ENCODE measurements at regions of chr11 and their contacts with region 1.

Region 1: DNA sequence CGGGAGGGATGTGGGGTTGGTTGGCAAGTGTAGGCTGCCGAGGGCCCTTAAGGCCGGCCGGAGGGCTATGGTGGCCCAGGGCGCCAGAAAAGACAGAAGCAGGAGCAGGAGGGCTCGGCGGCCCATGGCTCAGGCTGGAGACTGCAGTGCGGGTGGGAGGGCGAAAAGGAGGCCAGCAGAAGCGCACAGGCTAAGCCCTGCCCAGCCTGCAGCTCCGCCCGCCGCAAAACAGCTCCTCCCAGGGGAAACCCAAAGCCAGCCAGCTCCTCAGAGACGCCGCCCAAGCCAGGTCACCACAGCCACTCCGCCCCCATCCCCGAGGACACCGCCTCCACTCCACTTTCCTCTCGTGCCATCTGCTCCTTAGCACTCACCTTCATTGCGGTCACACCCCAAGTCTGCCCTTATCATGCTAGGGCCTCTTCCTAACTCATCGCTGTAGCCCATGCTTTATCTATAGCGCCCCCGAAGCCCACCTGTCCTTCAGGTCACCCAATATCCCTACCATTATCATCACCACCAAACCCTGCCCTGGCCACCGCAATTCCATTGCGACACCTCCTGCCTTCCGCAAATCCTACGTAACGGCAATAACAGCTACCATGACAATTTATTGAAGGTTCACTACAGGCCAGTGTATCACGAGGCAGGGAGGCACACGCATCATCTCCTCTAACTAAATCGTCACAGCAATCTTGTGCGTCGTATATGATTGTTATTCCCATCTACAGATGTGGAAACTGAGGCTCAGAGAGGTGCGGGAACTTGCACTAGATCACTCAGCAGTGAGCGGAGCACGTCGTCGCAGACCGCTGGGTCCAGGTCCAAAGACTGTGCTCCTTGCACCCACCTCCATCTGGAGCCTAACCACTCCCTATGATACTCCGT is at the start of gene PRCP:
- DNase-seq: peak; percentile 81
- ATAC-seq: peak; percentile 95
- H3K4me3 ChIP-seq: peak within 1 kb of the TSS; percentile 87 to 96 (median 94)
- H3K27ac ChIP-seq: peak within 1 kb of the TSS; percentile 82
- H3K4me1 ChIP-seq: peaks cover 34% of the 10 kb centered on the region
- H3K27me3 ChIP-seq: no peaks in the 10 kb centered on the region; a peak in 1 of 5 replicates
- CTCF ChIP-seq: peak; percentile 42; the same call in 1 of the 2 replicates
- EP300 ChIP-seq: no peak
- POLR2A ChIP-seq: peak; percentile 82 to 90
- RAD21 ChIP-seq: peak; percentile 44; the same call in 1 of the 2 replicates
- total RNA-seq, gene PRCP: 49.9 and 84.2 TPM in 2 replicates

Region 2: DNA sequence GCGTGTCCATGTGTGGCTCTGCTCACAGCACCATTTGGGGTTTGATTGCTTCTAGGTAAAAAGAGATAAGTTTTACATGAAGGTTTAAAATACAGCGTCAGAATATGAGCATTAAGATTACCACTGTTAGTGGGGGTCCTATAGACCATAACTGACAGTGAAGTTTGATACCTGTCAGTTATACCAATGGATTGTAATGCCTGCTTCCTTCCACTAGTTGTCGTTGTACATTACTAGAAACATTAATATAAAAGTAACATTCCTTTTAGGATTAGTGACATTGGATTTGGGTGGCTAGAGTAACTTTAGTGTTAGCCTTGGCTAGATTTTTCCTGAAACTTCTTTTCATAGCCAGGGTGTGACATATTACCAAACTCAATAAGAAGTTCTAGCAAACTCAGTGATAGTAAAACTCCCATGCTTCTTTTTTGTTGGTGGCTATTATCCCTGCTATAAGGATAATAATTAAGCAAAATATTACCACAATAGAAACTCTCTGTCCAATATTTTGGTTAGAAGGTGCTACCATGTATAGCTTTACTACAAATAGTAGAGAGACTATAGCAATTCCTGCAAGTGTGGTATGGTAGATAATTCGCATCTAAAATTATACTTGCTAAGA is 223.9 kb before region 1 on chr11:
- CTCF ChIA-PET with region 1: no interaction called
- POLR2A ChIA-PET with region 1: no interaction called
- in situ Hi-C with region 1: no loop called
- intact Hi-C with region 1: no loop called
- DNase-seq: peak; percentile 4
- ATAC-seq: peak; percentile 31; the same call in 1 of the 3 replicates
- H3K4me3 ChIP-seq: no peak overlapping the region
- H3K27ac ChIP-seq: no peak overlapping the region
- H3K4me1 ChIP-seq: no peaks in the 10 kb centered on the region
- H3K27me3 ChIP-seq: no peaks in the 10 kb centered on the region
- CTCF ChIP-seq: peak; percentile 29
- EP300 ChIP-seq: no peak
- POLR2A ChIP-seq: no peak
- RAD21 ChIP-seq: no peak

Region 3: DNA sequence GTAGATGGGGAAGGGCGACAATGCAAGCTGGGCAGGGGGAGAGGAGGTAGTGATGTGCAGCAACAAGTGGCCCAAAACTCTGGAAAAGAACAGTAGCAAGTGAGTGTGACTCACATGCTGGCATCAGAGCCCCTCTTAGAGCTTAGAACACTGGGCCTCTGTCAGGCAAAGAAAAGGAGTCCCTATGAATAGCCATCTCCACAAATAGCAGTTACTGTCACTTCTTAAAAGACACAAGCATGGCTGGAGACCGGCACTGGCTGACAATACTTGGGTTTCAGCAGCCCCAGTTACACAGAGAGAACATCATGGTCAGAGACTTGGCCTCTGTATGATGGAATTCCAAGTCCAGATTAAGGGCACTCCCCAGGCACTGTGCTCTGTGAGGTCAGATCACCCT is 58.5 kb before region 1 on chr11:
- CTCF ChIA-PET with region 1: no interaction called
- POLR2A ChIA-PET with region 1: no interaction called
- in situ Hi-C with region 1: no loop called
- intact Hi-C with region 1: no loop called
- DNase-seq: no peak
- ATAC-seq: no peak
- H3K4me3 ChIP-seq: no peak overlapping the region
- H3K27ac ChIP-seq: no peak overlapping the region
- H3K4me1 ChIP-seq: no peaks in the 10 kb centered on the region
- H3K27me3 ChIP-seq: no peaks in the 10 kb centered on the region
- CTCF ChIP-seq: no peak
- EP300 ChIP-seq: no peak
- POLR2A ChIP-seq: no peak
- RAD21 ChIP-seq: no peak

Region 4: GRCh38 chr11:82867495-82868082 is 32.9 kb before region 1 on chr11:
- CTCF ChIA-PET with region 1: no interaction called
- POLR2A ChIA-PET with region 1: no interaction called
- in situ Hi-C with region 1: no loop called
- intact Hi-C with region 1: loop called (anchors 1 kb)
- DNase-seq: peak; percentile 75
- ATAC-seq: peak; percentile 68
- H3K4me3 ChIP-seq: no peak overlapping the region
- H3K27ac ChIP-seq: no peak overlapping the region
- H3K4me1 ChIP-seq: 0 out of 2 replicates have a peak, but pooled peaks cover 14% of the 10 kb centered on the region
- H3K27me3 ChIP-seq: no peaks in the 10 kb centered on the region
- CTCF ChIP-seq: peak; percentile 76
- EP300 ChIP-seq: no peak
- POLR2A ChIP-seq: no peak
- RAD21 ChIP-seq: peak; percentile 40; the same call in 1 of the 2 replicates

Region 5: DNA sequence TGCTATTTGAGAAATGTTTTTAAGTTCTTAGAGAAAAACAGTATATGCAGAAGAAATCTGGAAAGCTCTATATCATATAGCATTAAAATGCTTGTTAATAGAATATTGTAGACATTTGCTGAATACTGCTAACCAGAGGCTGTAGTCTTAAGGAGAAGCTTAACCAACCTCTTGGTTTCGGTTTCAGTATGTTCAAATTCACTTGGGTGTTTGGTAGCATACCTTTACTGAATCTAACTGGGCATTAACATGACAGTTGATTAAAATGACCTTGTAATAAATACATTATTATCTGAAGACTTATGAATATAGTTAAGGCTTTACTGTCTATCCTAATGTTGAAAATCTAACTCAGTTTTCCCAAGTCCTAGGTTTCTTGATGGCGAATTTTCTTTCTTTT is 261.9 kb after region 1 on chr11:
- CTCF ChIA-PET with region 1: no interaction called
- POLR2A ChIA-PET with region 1: interaction called, 27 read pairs
- in situ Hi-C with region 1: loop called (anchors 10 kb)
- intact Hi-C with region 1: no loop called
- DNase-seq: no peak
- ATAC-seq: no peak
- H3K4me3 ChIP-seq: no peak overlapping the region
- H3K27ac ChIP-seq: no peak overlapping the region
- H3K4me1 ChIP-seq: peaks cover 38% of the 10 kb centered on the region
- H3K27me3 ChIP-seq: no peaks in the 10 kb centered on the region; a peak in 1 of 5 replicates
- CTCF ChIP-seq: no peak
- EP300 ChIP-seq: no peak
- POLR2A ChIP-seq: no peak
- RAD21 ChIP-seq: no peak

Region 6: DNA sequence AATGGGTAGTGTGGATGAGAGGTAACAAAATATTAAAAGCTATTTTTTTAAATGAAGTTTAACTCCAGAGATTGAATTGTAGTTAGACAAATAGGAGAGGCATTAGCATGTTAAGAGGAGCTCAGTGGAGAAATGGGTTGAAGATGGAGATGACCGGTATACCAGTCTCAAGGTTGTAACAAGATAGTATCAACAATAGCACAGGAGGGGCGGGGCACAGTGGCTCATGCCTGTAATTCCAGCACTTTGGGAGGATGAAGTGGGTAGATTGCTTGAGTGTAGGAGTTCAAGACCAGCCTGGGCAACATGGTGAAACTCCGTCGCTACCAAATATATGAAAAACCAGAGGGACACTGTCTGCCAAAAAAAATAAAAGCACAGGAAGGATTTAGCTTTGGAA is 286.9 kb after region 1 on chr11:
- CTCF ChIA-PET with region 1: no interaction called
- POLR2A ChIA-PET with region 1: interaction called, 4 read pairs
- in situ Hi-C with region 1: loop called (anchors 5 kb)
- intact Hi-C with region 1: no loop called
- DNase-seq: no peak
- ATAC-seq: peak; percentile 35; the same call in 2 of the 3 replicates
- H3K4me3 ChIP-seq: no peak overlapping the region
- H3K27ac ChIP-seq: no peak overlapping the region
- H3K4me1 ChIP-seq: peaks cover 9% of the 10 kb centered on the region
- H3K27me3 ChIP-seq: no peaks in the 10 kb centered on the region
- CTCF ChIP-seq: no peak
- EP300 ChIP-seq: no peak
- POLR2A ChIP-seq: no peak
- RAD21 ChIP-seq: no peak

Region 7: DNA sequence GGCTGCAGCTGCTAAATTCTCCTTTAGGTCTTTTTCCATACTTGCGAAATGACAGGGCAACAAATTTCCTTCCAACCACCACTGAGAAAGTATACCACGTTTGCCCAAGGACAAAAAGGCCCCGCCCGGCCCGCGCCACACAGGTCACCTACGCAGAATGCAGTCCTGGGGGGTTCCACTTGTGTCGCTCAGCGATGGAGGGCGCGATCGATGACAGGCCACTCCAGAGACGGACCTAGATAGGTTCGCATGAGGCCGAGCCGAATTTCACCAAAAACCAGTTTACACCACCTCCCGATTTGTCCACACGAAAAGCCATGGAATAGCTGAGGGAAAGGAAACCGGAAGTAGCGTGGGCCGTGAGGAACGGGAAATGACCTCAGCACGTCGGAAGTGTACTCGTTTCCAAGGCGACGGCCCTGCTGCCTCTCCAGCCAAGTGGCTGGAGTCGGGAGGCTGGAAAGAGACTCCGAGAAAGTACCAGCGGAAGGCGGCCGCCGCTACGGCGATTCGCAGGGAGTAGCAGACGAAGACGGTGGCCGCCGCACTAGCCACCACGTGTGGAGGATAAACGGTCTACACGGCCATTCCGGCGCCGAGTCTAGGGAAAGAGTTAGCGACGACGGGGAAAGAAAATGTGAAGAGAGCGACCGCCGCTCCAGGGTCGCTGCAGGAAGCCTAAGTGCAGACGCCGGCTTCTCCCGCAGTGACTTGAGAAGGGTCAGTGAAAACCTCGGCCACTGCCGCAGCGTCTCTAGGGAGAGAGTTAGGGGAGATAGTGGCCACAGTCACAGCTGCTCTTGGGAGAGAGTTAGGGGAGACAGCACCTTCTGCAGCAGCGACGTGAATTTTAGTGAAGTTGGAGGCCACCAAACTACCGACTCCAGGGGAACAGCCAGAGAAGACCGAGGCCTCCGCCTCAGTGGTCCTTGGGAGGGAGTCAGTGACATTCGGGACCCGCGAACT is 293.1 kb after region 1 on chr11 and contains the start of gene ANKRD42:
- CTCF ChIA-PET with region 1: no interaction called
- POLR2A ChIA-PET with region 1: interaction called, 4 read pairs
- in situ Hi-C with region 1: loop called (anchors 5 kb)
- intact Hi-C with region 1: loop called (anchors 2 kb)
- DNase-seq: peak; percentile 93
- ATAC-seq: peak; percentile 96
- H3K4me3 ChIP-seq: peak within 1 kb of the TSS; percentile 88 to 98 (median 90)
- H3K27ac ChIP-seq: peak within 1 kb of the TSS; percentile 86
- H3K4me1 ChIP-seq: peaks cover 36% of the 10 kb centered on the region
- H3K27me3 ChIP-seq: no peaks in the 10 kb centered on the region; a peak in 1 of 5 replicates
- CTCF ChIP-seq: no peak
- EP300 ChIP-seq: 0 out of 4 replicates have a peak, but pooled peaks of 1 of the 2 experiments have one; percentile 6
- POLR2A ChIP-seq: peak; percentile 78 to 80; a peak in 3 of 4 replicates
- RAD21 ChIP-seq: no peak
- total RNA-seq, gene ANKRD42: 3.7 and 3.8 TPM in 2 replicates

Region 8: DNA sequence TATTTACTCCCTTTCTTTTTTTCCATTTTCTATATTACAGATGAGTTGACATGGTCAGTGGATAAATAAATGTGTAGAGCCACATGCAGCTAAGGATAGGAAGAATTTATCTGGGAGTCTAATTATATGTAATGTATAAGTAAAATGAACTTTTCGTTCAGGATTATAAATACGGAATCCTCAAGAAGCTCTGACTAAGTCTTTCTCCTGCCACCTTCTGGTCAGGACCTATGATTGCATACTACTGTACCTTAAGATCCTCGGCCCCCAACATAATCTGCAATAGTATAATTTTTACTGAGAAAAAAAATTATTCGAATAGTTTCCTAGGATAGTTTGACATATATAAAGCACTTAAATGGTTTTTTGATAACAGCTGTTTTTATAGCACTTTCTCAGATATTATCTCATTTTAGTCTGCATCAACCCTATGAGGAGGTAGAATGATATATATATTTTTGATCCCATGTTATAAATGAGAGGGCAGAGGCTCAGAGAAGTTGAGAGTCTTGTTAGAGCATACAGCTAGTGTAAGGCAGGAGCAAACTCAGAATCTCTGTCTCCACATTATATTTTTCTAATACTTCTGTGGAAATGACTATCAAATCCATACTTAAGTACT is 349.6 kb after region 1 on chr11:
- CTCF ChIA-PET with region 1: no interaction called
- POLR2A ChIA-PET with region 1: interaction called, 4 read pairs
- in situ Hi-C with region 1: loop called (anchors 10 kb)
- intact Hi-C with region 1: no loop called
- DNase-seq: peak; percentile 24
- ATAC-seq: peak; percentile 46; the same call in 2 of the 3 replicates
- H3K4me3 ChIP-seq: no peak overlapping the region
- H3K27ac ChIP-seq: no peak overlapping the region
- H3K4me1 ChIP-seq: peaks cover 41% of the 10 kb centered on the region
- H3K27me3 ChIP-seq: no peaks in the 10 kb centered on the region
- CTCF ChIP-seq: peak; percentile 54
- EP300 ChIP-seq: no peak
- POLR2A ChIP-seq: no peak
- RAD21 ChIP-seq: no peak

Region 9: DNA sequence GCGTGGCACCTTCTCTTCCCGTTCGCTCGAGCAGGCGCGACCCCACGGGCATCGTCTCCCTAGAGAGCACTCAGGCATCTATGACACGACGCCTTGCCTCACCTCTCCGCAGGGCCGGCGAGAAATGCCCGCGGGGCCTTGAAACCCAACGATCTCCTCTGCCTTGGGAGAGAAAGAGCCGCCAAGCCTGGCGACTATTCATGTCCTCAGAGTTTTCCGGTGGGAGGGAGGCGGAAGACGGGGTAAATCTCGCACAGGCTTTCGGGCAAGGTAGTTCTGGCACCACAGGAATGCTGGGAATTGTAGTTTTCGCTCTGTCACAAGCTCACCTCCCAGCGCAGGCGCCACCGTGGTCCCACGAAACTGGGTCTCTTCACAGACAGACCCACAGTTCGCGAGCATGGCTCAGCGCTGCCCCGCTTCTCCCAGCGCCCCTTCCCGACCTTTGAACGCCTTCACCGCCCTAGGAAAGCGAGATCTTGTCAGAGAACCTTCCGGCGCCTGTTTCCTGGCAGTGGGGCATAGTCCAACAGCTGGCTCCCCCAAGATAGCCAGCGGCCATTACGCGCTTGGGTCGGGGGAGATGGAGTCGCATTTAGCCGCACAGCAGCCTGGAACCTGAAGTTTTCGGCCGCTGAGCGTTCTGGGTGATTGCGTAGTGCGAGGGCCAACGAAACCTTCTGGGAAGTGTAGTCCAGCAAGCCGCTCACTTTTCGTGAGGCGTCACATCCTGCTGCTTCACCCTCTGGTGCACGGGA is 385.4 kb after region 1 on chr11 and contains the start of gene CCDC90B:
- CTCF ChIA-PET with region 1: no interaction called
- POLR2A ChIA-PET with region 1: interaction called, 21 read pairs
- in situ Hi-C with region 1: no loop called
- intact Hi-C with region 1: loop called (anchors 10 kb)
- DNase-seq: peak; percentile 95
- ATAC-seq: peak; percentile 94
- H3K4me3 ChIP-seq: peak within 1 kb of the TSS; percentile 68 to 91 (median 75)
- H3K27ac ChIP-seq: peak within 1 kb of the TSS; percentile 96
- H3K4me1 ChIP-seq: peaks cover 34% of the 10 kb centered on the region
- H3K27me3 ChIP-seq: no peaks in the 10 kb centered on the region
- CTCF ChIP-seq: peak; percentile 81
- EP300 ChIP-seq: peak in 1 of 2 experiments; percentile 15; a peak in 1 of 4 replicates
- POLR2A ChIP-seq: peak; percentile 75 to 98
- RAD21 ChIP-seq: no peak; the same call in 1 of the 2 replicates
- total RNA-seq, gene CCDC90B: 46.1 and 56.3 TPM in 2 replicates

Measured in HepG2 (cell line).